Activated CD4-positive, alpha-beta T cell treated with anti-CD3 and anti-CD28 coated beads for 36 hours (primary cell): ENCODE measurements at regions of chr19 and their contacts with region 1.

Region 1: GRCh38 chr19:43754503-43755255 is at the start of gene SMG9:
- DNase-seq: peak; percentile 99
- ATAC-seq: peak; percentile 75
- H3K4me3 Mint-ChIP-seq: peak within 1 kb of the TSS; percentile 99
- H3K27ac Mint-ChIP-seq: peak within 1 kb of the TSS; percentile 99
- H3K4me1 Mint-ChIP-seq: peaks cover 69% of the 10 kb centered on the region
- H3K27me3 Mint-ChIP-seq: no peaks in the 10 kb centered on the region
- total RNA-seq, gene SMG9: 64.4 to 65.2 TPM

Region 2: DNA sequence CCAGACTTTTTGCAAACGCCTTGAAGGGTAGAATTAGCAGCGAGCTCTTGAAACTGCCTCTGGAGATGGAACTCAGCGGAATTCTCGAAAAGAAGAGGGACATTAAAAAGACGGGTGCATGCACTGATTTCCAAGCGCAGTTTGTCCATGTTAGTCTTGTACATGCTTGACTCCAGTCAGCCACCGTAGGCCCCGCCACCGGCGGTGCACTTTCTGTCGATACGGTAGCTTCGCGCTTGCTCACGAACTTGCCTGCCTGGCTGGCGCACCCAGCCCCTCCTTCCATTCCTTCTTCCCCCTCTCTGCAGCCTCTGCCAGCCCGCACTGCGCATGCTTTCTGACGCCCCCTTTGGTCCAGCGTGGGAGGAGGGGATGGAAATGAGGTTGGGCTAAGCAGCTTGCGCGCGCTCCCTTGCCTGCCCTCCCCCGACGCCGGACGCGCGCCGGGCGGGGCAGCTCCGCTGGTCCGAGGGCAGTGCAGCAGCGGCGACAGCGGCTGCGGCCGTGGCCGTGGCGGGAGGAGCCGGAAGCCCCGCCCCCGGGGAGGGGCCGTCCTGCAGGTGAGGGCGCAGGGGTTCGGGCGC is 221.6 kb before region 1 on chr19 and contains the start of gene ZNF575:
- CTCF ChIA-PET with region 1: no interaction called
- POLR2A ChIA-PET with region 1: interaction called, 3 read pairs
- intact Hi-C with region 1: loop called in 1 of 2 experiments (anchors 1 kb)
- DNase-seq: peak; percentile 95
- ATAC-seq: peak; percentile 57
- H3K4me3 Mint-ChIP-seq: peak within 1 kb of the TSS; percentile 83
- H3K27ac Mint-ChIP-seq: peak within 1 kb of the TSS; percentile 97
- H3K4me1 Mint-ChIP-seq: peaks cover 20% of the 10 kb centered on the region
- H3K27me3 Mint-ChIP-seq: no peaks in the 10 kb centered on the region
- total RNA-seq, gene ZNF575: 3.4 to 4.3 TPM

Region 3: GRCh38 chr19:43619262-43620060 is 135.2 kb before region 1 on chr19 and contains the start of gene ZNF428:
- CTCF ChIA-PET with region 1: no interaction called
- POLR2A ChIA-PET with region 1: no interaction called
- intact Hi-C with region 1: loop called in 1 of 2 experiments (anchors 1 kb)
- DNase-seq: peak; percentile 94
- ATAC-seq: peak; percentile 92
- H3K4me3 Mint-ChIP-seq: peak within 1 kb of the TSS; percentile 94
- H3K27ac Mint-ChIP-seq: peak within 1 kb of the TSS; percentile 99
- H3K4me1 Mint-ChIP-seq: peaks cover 17% of the 10 kb centered on the region
- H3K27me3 Mint-ChIP-seq: no peaks in the 10 kb centered on the region
- total RNA-seq, gene ZNF428: 9.0 to 10.1 TPM

Region 4: DNA sequence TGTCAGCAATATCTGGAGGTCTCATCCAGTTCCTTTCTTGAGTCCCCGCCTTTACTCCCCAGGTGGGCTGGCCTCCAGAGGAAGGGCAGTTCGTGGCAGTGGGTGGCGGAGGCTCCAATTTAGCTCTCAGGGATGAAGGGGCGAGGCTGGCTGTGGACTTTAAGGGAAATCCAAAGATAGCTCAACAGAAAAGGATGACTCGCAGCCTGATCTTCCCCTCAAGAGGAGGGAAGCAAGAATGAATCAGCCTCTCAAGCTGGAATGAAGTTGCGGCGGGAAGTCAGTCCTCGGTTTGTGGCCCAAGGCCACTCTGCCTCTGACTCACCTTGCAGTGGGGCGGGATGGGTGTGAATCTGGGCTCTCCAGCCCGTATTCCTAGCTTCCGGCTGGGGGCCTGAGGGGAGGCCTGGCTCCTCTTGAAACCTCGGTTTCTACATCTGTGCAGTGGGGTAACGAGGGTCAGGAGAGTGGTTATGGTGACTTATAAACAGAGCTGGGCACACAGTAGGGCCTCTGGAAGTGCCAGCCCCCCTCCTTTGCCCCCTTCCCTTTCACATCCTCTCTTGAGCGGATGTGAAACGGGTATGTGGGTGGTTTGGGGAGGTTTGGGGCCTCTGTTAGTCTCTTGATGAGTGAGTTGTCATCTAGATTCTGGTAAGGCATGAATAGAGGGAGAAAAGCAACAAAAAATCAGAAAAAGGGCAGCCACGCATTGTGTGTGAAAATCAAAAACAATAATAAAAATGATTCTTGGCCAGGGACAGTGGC is 10.6 kb after region 1 on chr19:
- CTCF ChIA-PET with region 1: interaction called, 94 read pairs
- POLR2A ChIA-PET with region 1: interaction called, 41 read pairs
- intact Hi-C with region 1: loop called (anchors 1 kb)
- DNase-seq: peak; percentile 92
- ATAC-seq: peak; percentile 81
- H3K4me3 Mint-ChIP-seq: peak overlapping the region; percentile 47
- H3K27ac Mint-ChIP-seq: peak overlapping the region; percentile 97
- H3K4me1 Mint-ChIP-seq: peaks cover 71% of the 10 kb centered on the region
- H3K27me3 Mint-ChIP-seq: no peaks in the 10 kb centered on the region

Region 5: DNA sequence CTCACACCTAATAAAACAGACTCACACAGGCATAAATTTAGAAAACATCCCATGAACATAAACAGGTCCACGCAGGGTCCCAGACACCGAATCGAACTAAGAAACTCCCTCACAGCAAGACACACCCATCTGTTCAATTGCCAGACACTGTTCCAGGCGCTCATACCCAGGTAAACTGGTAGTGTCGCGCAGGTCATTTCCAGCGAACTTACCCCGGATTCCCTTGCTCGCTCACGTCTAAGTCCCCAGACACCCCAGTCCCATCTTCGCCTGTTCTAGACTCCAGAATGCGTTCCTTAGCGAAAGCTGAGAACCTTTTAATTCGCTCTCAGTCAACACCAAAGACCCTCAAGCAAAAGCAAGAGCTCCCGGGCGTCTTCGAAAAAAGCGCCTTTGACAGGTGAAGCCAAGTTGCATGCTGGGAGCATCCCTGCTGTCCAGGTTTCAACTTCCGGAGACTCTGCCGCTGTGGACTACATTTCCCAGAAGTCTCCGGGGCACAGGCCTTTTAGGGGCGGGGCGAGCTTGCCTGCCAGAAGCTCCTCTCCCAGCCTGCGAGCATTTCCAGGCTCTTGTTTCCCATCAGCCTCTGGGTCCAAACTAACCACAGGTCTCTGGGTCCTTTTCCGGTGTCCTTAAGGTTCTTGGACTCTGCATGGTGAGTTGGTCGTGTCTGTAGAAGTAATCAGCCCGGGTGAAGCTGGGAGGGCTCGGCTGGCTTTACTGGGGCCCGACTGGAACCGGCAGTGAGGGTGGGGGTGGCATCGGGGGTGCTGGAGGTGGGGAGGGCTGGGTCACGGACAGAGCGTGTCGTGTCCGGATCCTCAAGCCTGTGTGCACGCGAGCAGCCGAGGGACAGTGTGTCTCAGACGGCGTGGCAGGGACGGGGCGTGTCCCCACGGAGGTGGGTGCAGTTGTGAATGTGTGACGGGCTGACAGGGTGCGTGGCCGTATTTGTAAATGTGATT is 72.4 kb after region 1 on chr19 and contains the start of gene ZNF283:
- CTCF ChIA-PET with region 1: no interaction called
- POLR2A ChIA-PET with region 1: no interaction called
- intact Hi-C with region 1: loop called in 1 of 2 experiments (anchors 2 kb)
- DNase-seq: peak; percentile 92
- ATAC-seq: peak; percentile 99
- H3K4me3 Mint-ChIP-seq: peak within 1 kb of the TSS; percentile 87
- H3K27ac Mint-ChIP-seq: peak within 1 kb of the TSS; percentile 60
- H3K4me1 Mint-ChIP-seq: peaks cover 14% of the 10 kb centered on the region
- H3K27me3 Mint-ChIP-seq: peaks cover 5% of the 10 kb centered on the region
- total RNA-seq, gene ZNF283: 5.4 to 6.8 TPM